WTC11 (cell line): ENCODE measurements at regions of chr2 and their contacts with region 1.

Region 1: DNA sequence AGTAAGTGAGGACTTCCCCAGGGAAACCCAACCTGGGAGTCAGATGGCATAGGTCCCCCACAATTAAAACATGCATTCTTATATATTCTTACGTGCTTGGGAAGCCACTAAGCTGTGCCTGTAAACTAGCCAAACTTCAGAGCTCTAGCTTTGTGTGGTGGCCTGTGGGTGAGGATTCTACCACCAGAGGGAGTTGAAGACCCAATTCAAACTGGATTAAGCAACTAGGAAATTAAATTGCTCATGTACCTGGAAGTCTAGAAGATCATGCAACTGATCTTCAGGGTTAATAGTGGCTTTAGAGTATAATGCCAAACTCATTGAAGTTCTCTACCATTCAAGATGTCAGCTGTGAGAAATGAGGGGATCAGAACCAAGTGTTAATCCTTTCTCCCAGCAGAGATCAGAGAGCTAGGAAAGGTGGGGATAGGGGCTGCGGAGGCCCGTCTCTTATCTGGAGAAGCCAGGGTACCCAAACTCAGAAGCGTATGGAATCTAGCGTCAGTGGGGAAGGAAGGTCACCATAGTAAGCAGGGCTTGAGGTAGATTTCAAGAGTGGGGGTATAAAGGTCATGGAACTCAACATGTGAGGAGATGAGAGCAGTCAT is 53.2 kb upstream of the CCDC85A start:
- DNase-seq: peak; percentile 39
- ATAC-seq: peak; percentile 87
- H3K4me3 Mint-ChIP-seq: no peak overlapping the region
- H3K27ac Mint-ChIP-seq: no peak overlapping the region
- H3K4me1 Mint-ChIP-seq: peaks cover 24% of the 10 kb centered on the region
- H3K27me3 Mint-ChIP-seq: no peaks in the 10 kb centered on the region
- CTCF ChIP-seq: peak; percentile 37

Region 2: DNA sequence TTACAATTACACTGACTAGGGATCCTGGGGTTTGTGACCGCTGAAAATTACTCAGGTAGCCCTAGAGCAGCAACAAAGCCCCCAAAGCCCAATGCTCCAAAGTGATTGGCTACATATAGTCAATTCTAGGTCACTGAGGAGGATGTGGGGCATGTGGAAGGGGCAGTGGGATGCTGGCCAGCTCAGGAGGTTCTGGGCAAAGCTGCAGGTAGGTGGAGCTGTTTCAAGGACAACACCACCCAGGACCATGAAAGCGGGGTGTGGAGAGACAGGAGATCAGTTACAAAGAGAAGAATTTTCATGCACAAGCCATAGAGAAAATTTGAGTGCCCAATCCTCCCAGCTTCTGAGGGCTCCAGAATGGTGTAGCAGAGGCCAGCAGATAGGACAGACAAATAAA is 21.8 kb before region 1 on chr2:
- CTCF ChIA-PET with region 1: interaction called, 19 read pairs
- POLR2A ChIA-PET with region 1: no interaction called
- DNase-seq: peak; percentile 24
- ATAC-seq: peak; percentile 87
- H3K4me3 Mint-ChIP-seq: no peak overlapping the region
- H3K27ac Mint-ChIP-seq: no peak overlapping the region; the same call in 1 of the 2 replicates
- H3K4me1 Mint-ChIP-seq: peaks cover 19% of the 10 kb centered on the region
- H3K27me3 Mint-ChIP-seq: no peaks in the 10 kb centered on the region
- CTCF ChIP-seq: no peak

Region 3: DNA sequence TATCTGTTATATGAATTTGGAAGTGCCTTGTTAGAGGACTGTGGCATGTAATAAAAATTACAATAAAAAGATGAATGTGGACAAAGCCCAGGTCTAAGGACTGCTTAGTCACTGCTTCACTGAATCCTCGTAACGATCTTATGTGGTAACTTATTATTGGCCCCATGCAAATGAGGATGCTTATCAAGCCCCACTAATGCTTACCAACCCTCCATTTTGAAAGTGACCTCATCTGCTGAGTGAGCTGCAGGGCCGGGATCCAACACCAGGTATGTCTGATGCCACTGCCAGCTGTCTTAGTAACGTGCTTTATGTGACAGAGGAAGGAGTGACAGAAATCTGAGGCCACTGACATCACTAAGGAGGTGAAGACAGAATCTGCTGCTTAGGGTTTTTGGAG is 12.1 kb before region 1 on chr2:
- CTCF ChIA-PET with region 1: interaction called, 36 read pairs
- POLR2A ChIA-PET with region 1: no interaction called
- DNase-seq: no peak
- ATAC-seq: peak; percentile 45
- H3K4me3 Mint-ChIP-seq: peak overlapping the region; percentile 65
- H3K27ac Mint-ChIP-seq: peak overlapping the region; percentile 91
- H3K4me1 Mint-ChIP-seq: peaks cover 57% of the 10 kb centered on the region
- H3K27me3 Mint-ChIP-seq: no peaks in the 10 kb centered on the region
- CTCF ChIP-seq: no peak